Activated CD4-positive, alpha-beta T cell treated with anti-CD3 and anti-CD28 coated beads, Interleukin-2, amount 10 ng/mL, durations not matched to agents 24 days and 14 days (primary cell): ENCODE measurements at regions of chr3 and their contacts with region 1.

Region 1: GRCh38 chr3:112979240-112979832 is 4.4 kb upstream of the CD200R1 start:
- DNase-seq: peak; percentile 76
- H3K4me3 Mint-ChIP-seq: no peak overlapping the region
- H3K27ac Mint-ChIP-seq: peak overlapping the region; percentile 7
- H3K4me1 Mint-ChIP-seq: peaks cover 46% of the 10 kb centered on the region
- H3K27me3 Mint-ChIP-seq: peaks cover 4% of the 10 kb centered on the region

Region 2: DNA sequence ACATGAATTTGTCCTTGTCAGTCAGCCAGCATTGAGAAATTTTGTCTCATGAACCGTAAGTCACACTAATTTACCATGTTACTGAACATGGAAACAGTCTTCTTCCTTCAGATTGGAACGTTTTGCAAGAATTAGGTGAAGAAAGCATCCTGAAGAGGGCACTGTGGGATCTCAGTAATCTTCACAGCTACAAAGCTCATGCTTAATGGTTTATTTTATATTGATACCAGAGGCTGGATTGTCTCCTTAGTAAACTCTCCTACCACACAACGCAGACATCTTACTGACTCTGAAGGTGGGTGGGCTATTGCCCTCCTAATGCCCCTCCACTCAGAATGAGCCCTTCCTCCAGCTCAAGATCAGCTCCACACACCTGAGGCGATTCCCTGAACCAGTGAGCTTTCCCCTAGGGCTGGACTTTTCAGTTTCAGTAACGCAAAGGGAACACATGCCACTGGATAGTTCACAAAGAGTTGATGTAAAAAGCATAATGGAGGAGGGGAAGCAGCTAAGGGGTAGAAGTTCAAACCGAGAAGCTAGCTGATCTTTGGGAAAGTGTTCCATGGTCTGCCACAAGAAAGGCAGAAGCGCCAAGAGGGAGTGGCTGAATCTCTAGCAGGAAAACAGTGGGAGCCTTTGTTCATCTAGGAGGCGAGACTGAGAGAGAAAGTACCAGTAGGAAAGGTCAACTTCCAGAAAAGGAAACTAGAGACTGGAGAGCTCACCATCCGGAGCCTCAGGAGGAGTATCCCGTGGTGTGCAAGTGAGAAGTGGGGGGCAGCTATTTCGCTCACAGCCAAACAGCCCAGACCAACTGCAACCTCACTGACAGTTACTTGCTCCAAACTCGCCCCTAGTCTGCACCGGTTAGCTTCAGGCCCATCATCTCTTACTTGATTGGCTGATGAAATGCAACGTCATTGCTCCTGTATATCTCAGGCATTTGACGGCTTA is 685.7 kb before region 1 on chr3 and contains the start of gene SLC9C1:
- intact Hi-C with region 1: loop called (anchors 10 kb)
- DNase-seq: peak; percentile 87
- H3K4me3 Mint-ChIP-seq: peak within 1 kb of the TSS; percentile 76
- H3K27ac Mint-ChIP-seq: peak within 1 kb of the TSS; percentile 60
- H3K4me1 Mint-ChIP-seq: peaks cover 26% of the 10 kb centered on the region
- H3K27me3 Mint-ChIP-seq: no peaks in the 10 kb centered on the region
- total RNA-seq, gene SLC9C1: not detected in 2 replicates

Region 3: GRCh38 chr3:112582244-112582874 is 397.0 kb before region 1 on chr3:
- intact Hi-C with region 1: loop called (anchors 1 kb)
- DNase-seq: peak; percentile 79
- H3K4me3 Mint-ChIP-seq: no peak overlapping the region
- H3K27ac Mint-ChIP-seq: no peak overlapping the region
- H3K4me1 Mint-ChIP-seq: peaks cover 3% of the 10 kb centered on the region
- H3K27me3 Mint-ChIP-seq: no peaks in the 10 kb centered on the region

Region 4: DNA sequence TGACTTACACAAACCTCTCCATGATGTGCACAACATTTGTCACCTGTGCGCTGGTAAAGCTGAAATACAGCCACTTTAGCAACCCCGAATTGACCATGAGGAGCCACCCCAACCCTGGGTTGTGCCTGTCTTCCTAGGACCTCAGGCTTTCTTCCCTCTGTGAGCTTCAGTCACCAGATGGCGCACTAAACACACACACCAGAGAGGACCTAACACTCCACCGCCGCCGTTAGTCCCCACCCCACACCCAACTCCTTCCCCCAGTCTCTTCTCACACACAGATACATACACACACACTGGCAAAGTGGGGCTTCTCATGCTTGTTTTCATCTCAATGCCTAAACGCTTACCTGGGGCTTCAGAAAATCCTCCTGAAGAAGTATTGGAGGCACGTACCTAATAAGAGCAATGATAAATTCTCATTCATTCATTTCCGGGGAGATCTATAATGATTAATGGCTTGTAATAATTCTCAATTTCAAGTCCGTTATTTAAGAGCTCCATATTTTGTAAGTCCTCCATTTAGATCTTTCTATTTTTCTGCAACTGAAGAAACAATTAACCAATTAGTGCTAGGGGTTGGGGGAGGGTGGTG is 336.3 kb before region 1 on chr3:
- intact Hi-C with region 1: loop called (anchors 1 kb)
- DNase-seq: peak; percentile 94
- H3K4me3 Mint-ChIP-seq: peak overlapping the region; percentile 78
- H3K27ac Mint-ChIP-seq: peak overlapping the region; percentile 34
- H3K4me1 Mint-ChIP-seq: peaks cover 21% of the 10 kb centered on the region
- H3K27me3 Mint-ChIP-seq: peaks cover 11% of the 10 kb centered on the region